ENCODE measurements at regions of chr17 and their contacts with region 1.

Region 1: DNA sequence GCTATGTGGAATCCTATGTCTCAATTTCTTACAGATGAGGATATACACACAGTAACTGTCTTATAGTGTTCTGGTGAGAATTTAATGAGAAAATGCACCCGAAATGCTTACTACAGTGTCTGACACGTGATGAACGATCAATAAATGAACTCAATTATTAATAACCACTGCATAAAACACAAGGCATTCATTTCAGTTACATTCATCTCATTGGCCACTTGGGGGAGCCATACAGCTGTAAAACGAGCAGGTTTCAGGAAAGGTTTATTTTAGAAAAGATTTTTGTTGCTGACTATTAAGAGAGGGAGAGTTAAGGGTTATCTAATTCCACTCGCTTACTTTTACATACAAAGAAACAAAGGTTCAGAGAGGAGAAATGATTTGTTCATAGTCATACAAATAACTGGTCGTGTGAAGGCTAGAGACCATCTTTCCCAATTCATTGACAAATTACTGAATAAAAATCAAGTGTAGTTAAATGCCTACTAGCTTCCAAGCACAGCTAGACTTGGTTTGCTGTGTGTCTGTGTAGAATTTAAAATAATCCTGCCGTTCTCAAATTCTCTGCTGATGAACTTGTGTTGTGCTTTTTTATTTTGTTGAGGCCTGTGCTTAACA is 160.1 kb downstream of the MAP2K4 start:
- DNase-seq: peak; percentile 79
- ATAC-seq: peak; percentile 96
- H3K4me3 ChIP-seq: no peak overlapping the region
- H3K27ac ChIP-seq: no peak overlapping the region
- H3K4me1 ChIP-seq: no peaks in the 10 kb centered on the region
- H3K27me3 ChIP-seq: no peaks in the 10 kb centered on the region
- CTCF ChIP-seq: peak; percentile 90
- POLR2A ChIP-seq: 0 out of 2 replicates have a peak, but pooled peaks have one; percentile 30
- RAD21 ChIP-seq: peak; percentile 91

Region 2: GRCh38 chr17:12140685-12141084 is 40.1 kb before region 1 on chr17:
- CTCF ChIA-PET with region 1: no interaction called
- POLR2A ChIA-PET with region 1: no interaction called
- dilution Hi-C with region 1: no loop called
- in situ Hi-C with region 1: no loop called
- intact Hi-C with region 1: no loop called
- DNase-seq: no peak
- ATAC-seq: no peak
- H3K4me3 ChIP-seq: no peak overlapping the region
- H3K27ac ChIP-seq: no peak overlapping the region
- H3K4me1 ChIP-seq: no peaks in the 10 kb centered on the region
- H3K27me3 ChIP-seq: no peaks in the 10 kb centered on the region
- CTCF ChIP-seq: no peak
- POLR2A ChIP-seq: no peak
- RAD21 ChIP-seq: no peak

Region 3: DNA sequence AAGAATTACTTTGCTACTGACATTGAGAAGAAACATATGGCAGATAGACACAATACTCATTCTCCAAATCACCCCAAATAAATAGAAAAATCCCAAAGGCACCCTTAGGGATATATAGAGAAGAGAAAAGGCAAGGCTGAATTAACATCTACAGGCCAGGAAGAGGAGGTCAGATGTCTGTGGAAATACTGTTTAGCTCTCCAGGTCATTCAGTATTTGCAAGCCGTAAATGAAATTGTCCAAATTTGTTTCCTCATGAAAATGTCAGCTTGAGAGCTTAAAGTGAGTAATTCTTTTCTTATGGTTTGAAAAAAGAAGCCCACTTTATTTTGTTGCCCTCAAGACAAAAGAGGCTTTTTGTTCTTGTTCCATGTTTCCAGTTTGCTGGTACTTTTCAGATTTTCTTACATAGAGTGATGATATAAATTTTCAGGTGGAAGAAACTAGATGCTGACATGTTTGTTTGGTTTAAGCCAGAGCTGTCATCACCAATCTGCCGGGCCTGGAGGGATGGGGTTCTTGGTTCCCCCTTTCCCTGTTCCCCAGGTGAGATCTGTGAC is 29.0 kb after region 1 on chr17:
- CTCF ChIA-PET with region 1: no interaction called
- POLR2A ChIA-PET with region 1: no interaction called
- dilution Hi-C with region 1: no loop called
- in situ Hi-C with region 1: no loop called
- intact Hi-C with region 1: no loop called
- DNase-seq: no peak
- ATAC-seq: no peak
- H3K4me3 ChIP-seq: no peak overlapping the region
- H3K27ac ChIP-seq: no peak overlapping the region
- H3K4me1 ChIP-seq: no peaks in the 10 kb centered on the region
- H3K27me3 ChIP-seq: peaks cover 8% of the 10 kb centered on the region
- CTCF ChIP-seq: no peak
- POLR2A ChIP-seq: no peak
- RAD21 ChIP-seq: no peak

Region 4: DNA sequence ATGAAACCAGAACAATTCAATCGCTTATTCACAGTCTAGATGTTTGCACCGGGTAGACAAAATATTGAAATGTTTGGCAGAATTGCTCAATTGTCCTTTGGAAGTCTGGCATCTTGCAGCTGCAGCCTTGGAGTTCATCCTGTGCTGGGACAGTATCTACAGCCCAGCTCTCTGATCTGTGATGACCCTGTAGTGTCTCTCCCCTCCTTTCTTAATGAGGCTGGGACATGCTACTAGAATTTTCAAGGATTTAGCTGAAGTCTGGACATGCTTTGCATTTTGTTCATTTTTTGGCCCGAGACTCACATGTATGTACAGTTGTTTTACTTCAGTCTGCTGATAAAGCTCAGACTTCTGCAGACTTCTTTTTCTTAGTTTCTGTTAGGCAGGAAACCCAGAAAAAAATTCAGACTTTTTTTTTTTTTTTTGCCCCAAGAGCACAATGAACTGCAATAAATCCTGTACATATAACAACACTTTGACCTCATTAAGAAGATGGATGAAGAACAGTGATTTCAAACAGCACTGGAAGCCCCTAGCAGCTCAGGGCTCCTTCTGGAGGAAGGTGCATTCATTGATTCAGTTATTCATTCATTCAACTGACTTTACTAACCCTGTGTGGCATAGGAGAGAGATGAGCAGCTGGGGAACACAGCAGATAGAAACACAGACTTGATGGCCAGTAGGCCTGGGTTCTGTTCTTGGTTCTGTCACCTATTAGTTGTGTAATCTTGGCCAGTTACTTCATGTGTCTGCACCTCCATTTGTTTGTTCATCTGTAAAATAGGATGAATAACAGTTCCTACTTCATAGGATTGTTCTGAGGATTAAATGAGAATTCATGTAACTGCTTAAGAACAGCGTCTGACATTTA is 50.0 kb after region 1 on chr17:
- CTCF ChIA-PET with region 1: no interaction called
- POLR2A ChIA-PET with region 1: no interaction called
- dilution Hi-C with region 1: no loop called
- in situ Hi-C with region 1: no loop called
- intact Hi-C with region 1: loop called (anchors 5 kb)
- DNase-seq: peak; percentile 53
- ATAC-seq: peak; percentile 77
- H3K4me3 ChIP-seq: no peak overlapping the region
- H3K27ac ChIP-seq: peak overlapping the region; percentile 9; the same call in 1 of the 2 replicates
- H3K4me1 ChIP-seq: peaks cover 14% of the 10 kb centered on the region
- H3K27me3 ChIP-seq: peaks cover 2% of the 10 kb centered on the region; the same call in 1 of the 2 replicates
- CTCF ChIP-seq: no peak
- POLR2A ChIP-seq: no peak
- RAD21 ChIP-seq: no peak

Region 5: GRCh38 chr17:12545877-12546513 is 365.2 kb after region 1 on chr17:
- CTCF ChIA-PET with region 1: no interaction called
- POLR2A ChIA-PET with region 1: no interaction called
- dilution Hi-C with region 1: no loop called
- in situ Hi-C with region 1: no loop called
- intact Hi-C with region 1: loop called (anchors 5 kb)
- DNase-seq: peak; percentile 63
- ATAC-seq: peak; percentile 88
- H3K4me3 ChIP-seq: no peak overlapping the region
- H3K27ac ChIP-seq: no peak overlapping the region
- H3K4me1 ChIP-seq: peaks cover 4% of the 10 kb centered on the region; the same call in 1 of the 2 replicates
- H3K27me3 ChIP-seq: no peaks in the 10 kb centered on the region
- CTCF ChIP-seq: peak; percentile 70
- POLR2A ChIP-seq: no peak
- RAD21 ChIP-seq: peak; percentile 75

Region 6: GRCh38 chr17:13002766-13003451 is 822.2 kb after region 1 on chr17:
- CTCF ChIA-PET with region 1: no interaction called
- POLR2A ChIA-PET with region 1: no interaction called
- dilution Hi-C with region 1: no loop called
- in situ Hi-C with region 1: loop called (anchors 5 kb)
- intact Hi-C with region 1: loop called (anchors 1 kb)
- DNase-seq: peak; percentile 77
- ATAC-seq: peak; percentile 95
- H3K4me3 ChIP-seq: no peak overlapping the region
- H3K27ac ChIP-seq: no peak overlapping the region
- H3K4me1 ChIP-seq: no peaks in the 10 kb centered on the region
- H3K27me3 ChIP-seq: no peaks in the 10 kb centered on the region
- CTCF ChIP-seq: peak; percentile 83
- POLR2A ChIP-seq: no peak
- RAD21 ChIP-seq: peak; percentile 88